Posterior cingulate gyrus (tissue), 11 donors: ENCODE measurements at regions of chr15 and their contacts with region 1.

Region 1: GRCh38 chr15:29149738-29150075 is 119.9 kb downstream of the NSMCE3 start:
- DNase-seq: no peak

Region 2: DNA sequence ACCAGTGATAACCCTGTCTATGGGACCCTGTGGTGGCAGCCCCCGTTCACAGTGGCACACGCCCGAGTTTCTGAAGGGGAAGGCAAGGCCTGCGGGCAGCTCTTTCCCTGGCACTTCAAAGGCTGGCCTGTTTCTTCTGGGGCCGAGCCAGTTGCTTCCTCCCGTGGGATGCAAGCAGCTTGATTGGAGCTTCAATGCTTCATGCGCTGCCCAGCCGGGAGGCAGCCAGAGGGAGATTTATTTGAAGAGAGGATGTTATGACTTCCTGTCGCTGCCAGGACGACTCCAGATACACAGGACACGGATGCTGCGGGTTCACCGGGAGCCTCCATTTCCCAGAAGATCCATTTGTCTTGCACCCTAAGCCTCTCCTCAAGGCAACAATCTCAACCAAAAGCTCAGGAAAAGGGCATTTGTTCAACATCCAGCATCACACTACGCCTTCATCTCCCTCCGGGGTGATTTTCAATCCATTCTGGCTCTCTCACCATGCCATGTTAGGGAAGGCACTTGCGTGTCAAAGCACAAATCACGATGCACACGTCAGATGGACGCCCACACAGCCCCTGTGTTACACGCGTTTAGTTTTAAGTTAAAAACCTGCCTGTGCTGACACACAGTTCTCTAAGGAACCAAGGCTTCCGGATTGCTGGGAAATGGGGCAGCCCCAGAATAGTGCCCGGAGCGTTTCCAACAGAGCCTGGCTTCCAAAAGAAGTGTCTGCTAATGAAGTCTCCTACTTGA is 1380.8 kb before region 1 on chr15:
- intact Hi-C with region 1: no loop called
- DNase-seq: peak in 8 of 10 donors; percentile 36 to 90 (median 50)

Region 3: DNA sequence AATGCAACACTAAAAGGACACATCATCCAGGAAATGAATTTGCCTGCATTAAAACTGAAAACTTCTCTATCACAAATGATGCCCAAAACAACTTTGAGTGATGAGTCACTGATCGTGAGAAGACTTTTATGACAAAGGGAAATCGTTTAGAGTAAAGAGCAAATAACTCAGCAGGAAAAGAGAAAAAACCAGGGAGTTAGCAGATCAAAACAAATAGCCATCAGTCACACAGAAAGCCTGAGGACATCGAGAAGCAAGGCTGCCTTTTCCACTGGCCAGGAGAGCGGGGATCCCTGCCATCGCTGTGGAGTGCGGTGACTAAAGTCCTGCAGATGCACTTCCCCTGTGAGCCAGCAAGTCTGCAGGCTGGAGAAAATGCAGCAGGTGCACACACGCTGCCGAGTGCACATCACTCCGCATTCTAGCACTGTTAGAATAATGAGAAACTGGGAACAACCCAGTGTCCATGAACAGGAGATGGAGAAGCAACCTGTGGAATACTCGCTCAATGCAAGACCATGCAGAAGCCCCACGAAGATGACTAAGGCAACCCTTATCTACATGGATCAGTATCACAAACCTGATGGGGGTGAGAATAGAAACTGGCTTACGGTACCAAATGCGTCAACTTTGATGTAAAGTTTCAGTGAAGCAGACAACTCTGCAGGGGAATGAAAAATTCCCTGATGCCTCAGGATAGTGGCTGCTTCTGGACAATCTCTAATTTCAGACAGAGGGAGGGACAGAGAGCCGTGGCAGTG is 33.5 kb after region 1 on chr15:
- intact Hi-C with region 1: loop called (anchors 5 kb)
- DNase-seq: peak in 1 of 10 donors; percentile 78